Heart right ventricle (tissue), 16 donors: ENCODE measurements at regions of chr13 and their contacts with region 1.

Region 1: GRCh38 chr13:31919971-31920726 is 111.4 kb upstream of the FRY start:
- DNase-seq: no peak
- ATAC-seq: no peak
- H3K4me3 ChIP-seq: no peak overlapping the region
- H3K27ac ChIP-seq: peak overlapping the region in 2 of 10 donors; percentile 10 to 49
- H3K4me1 ChIP-seq: peaks cover 3 to 44% (median 25%) of the 10 kb centered on the region in 9 donors
- H3K27me3 ChIP-seq: no peaks in the 10 kb centered on the region
- CTCF ChIP-seq: no peak

Region 2: DNA sequence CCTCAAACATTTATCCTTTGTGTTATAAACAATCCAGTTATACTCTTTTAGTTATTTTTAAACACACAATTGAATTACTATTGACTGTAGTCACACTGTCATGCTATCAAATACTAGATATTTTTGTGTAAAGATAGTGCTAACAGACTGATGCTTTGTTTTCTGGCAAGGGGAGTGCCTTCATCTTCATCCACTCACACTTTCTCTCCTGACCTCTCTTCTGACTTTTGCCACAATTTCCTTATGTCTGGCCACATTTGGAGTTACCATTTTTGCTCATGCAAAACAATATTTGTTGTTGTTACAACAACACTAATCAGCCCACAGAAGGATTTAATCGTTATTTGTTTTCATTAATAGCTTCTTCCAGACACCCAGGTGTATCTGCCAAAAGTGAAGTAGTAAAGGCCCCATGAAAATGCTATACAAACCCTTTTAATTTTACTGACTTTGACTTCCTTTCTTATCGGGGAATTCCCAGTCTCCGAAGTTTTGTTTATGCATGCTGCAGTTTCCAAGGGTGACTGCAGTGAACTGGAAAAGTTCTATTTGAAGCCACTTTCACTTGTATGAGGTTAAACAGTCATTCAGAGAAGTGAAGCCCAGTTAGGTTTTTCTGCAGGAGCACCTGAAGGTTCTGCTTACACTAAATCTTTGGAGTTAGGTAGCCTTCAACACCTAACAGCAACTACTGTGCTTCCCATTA is 45.4 kb after region 1 on chr13:
- intact Hi-C with region 1: loop called in 1 of 10 experiments (anchors 5 kb)
- DNase-seq: no peak
- ATAC-seq: peak in 5 of 8 donors; percentile 48 to 60 (median 51)
- H3K4me3 ChIP-seq: no peak overlapping the region
- H3K27ac ChIP-seq: peak overlapping the region in 4 of 10 donors; percentile 19 to 43 (median 36)
- H3K4me1 ChIP-seq: peaks cover 0 to 67% (median 50%) of the 10 kb centered on the region in 9 donors
- H3K27me3 ChIP-seq: no peaks in the 10 kb centered on the region
- CTCF ChIP-seq: no peak

Region 3: GRCh38 chr13:32007494-32007893 is 87.3 kb after region 1 on chr13:
- intact Hi-C with region 1: loop called in 2 of 10 experiments (anchors 5 to 10 kb)
- DNase-seq: no peak
- ATAC-seq: no peak
- H3K4me3 ChIP-seq: no peak overlapping the region
- H3K27ac ChIP-seq: no peak overlapping the region
- H3K4me1 ChIP-seq: peaks cover 0 to 31% (median 20%) of the 10 kb centered on the region in 9 donors
- H3K27me3 ChIP-seq: no peaks in the 10 kb centered on the region
- CTCF ChIP-seq: no peak